Ascending aorta (tissue), 2 donors: ENCODE measurements at regions of chr3 and their contacts with region 1.

Region 1: DNA sequence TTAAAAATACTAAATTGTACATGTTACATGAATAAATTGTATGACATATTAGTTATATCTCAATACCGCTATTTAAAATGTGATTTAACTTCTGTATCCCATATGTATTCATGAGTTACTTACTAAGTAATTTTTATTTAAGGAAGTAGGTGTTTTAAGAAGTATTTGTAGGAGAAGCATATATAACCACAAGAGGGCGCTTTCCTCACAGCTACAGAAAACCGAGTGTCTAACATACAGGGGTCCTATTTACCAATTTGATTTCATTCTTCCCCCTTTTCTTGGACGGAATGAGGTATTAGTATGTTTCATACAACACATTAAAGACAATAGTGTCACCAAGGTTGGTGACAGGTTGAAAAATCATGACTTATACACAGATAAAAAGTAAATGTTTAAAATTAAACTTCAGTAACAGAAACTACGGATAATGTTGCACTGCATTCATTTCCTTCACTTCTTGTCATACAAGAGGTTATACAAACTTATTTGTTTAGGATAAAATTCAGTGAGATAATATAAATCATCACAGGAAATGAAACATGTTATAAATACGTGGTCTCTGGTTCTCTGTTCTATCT is 253.6 kb downstream of the MAGI1 start:
- DNase-seq: no peak
- H3K4me3 ChIP-seq: no peak overlapping the region
- H3K27ac ChIP-seq: peak overlapping the region; percentile 62 to 66
- H3K4me1 ChIP-seq: peaks cover 0 to 7% of the 10 kb centered on the region in 2 donors
- H3K27me3 ChIP-seq: no peaks in the 10 kb centered on the region
- CTCF ChIP-seq: peak; percentile 32 to 73 (median 58)

Region 2: DNA sequence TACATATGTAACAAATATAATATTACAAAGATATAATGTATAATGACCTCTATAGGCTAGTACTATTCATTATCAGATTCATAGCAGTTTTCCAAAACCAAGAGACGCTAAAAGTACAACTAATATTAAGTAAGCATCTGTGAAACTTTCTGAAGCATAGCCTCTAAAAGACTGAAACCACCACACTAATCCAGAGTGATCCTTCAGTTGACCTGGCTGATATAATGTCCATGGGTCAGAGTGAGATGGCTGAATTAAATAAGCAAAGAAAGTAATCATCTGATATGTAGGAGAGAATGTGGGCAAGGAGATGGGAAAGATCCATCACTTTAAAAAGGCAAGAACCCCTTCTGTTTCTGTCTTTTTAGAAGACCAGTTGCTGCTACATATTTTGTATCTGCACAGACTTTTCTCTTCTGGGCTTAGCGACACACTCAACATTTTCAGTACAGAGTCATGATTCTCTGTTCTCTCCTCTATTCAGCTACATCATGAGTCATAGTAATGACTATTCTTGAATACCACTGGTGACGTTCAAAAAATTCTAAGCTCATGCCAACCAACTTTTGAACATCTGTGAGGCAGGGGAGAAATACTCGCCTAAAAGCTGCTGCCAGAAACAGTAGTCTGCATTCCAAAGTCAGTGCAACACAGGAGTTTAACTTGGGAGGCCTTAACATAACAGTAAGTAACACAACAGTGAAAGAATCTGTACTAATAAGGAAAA is 104.0 kb after region 1 on chr3:
- intact Hi-C with region 1: loop called (anchors 5 kb)
- DNase-seq: peak in 1 of 2 donors; percentile 81
- H3K4me3 ChIP-seq: peak overlapping the region in 1 of 2 donors; percentile 29
- H3K27ac ChIP-seq: peak overlapping the region; percentile 88 to 92
- H3K4me1 ChIP-seq: peaks cover 5 to 32% of the 10 kb centered on the region in 2 donors
- H3K27me3 ChIP-seq: no peaks in the 10 kb centered on the region
- CTCF ChIP-seq: no peak

Region 3: DNA sequence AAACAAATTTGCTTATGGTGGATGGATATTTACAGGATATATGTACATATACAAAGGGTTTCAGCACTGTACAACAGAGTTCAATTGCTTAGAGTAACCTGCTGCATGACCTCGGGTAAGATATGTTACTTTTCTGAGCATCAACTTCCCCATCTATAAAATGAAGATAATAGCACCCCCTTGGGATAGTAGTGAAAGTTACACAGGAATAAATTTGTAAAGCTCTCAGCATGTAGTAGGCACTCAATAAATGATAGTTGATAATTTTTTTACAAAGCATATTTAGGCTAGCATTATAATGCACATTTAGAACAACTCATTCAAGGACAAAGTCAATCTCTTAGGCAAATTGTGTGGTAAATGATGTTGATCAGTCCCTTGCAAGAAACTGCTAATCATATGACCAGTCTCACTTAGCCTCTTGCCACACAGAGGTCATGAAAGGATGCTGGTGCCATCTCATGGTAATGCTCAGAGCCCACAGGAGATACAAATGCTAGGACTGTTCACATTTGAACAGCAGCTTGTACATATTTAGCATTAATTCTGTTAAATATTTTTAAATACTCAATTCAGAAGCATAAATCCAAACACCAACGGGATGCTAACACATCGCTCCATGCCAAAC is 129.7 kb after region 1 on chr3:
- intact Hi-C with region 1: loop called (anchors 2 kb)
- DNase-seq: no peak
- H3K4me3 ChIP-seq: no peak overlapping the region
- H3K27ac ChIP-seq: no peak overlapping the region
- H3K4me1 ChIP-seq: no peaks in the 10 kb centered on the region
- H3K27me3 ChIP-seq: no peaks in the 10 kb centered on the region
- CTCF ChIP-seq: peak in 1 of 3 experiments; percentile 23

Region 4: DNA sequence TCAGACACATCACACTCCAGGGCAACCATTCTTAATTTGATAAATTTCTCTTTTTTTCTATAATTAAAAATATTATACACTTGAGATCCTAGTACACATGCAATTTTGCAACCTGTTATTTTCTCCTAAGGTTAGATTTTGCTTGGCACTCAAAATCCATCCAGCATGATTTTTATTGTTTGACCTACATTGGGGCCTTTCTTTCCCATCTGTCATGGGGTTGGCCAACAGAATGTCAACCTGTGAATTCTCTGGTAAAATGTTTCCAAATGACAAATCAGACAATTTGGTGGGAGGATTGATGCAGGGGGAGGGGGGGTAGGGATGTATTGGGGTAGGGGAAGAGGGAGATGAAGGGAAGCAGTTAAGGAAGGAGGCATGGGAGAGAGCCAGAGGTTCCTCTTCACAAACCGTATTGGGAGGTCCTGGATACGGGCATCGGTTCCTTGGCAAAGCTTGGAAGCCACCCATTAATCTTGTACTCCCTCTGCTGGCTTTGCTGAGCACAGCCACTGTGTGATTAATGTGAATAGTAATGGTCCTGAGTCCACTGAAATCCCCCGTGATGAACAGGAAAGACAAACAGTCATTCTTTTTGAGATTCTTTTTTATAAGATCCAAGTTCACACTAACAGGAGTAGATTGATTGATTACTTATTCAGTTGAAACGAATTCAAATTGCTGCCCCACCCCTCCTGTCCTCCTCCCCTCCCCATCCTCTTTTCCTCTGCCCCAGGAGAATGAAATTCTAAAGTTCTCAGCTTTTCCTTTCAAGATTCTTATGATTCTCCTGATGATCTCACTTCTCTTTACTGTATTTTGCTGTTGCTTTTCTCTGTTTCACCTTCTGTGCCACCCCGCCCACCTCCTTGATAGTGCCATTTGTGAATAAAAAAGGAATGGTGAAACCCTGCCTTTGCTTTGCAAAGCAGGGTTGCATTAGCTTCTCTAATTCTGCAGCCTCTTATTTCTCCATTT is 353.5 kb after region 1 on chr3:
- intact Hi-C with region 1: loop called (anchors 1 kb)
- DNase-seq: peak in 1 of 2 donors; percentile 78
- H3K4me3 ChIP-seq: no peak overlapping the region
- H3K27ac ChIP-seq: no peak overlapping the region
- H3K4me1 ChIP-seq: no peaks in the 10 kb centered on the region
- H3K27me3 ChIP-seq: no peaks in the 10 kb centered on the region
- CTCF ChIP-seq: peak; percentile 70 to 87 (median 72)